ENCODE measurements at regions of chr2 and their contacts with region 1.

Region 1: GRCh38 chr2:196239622-196240587 is 68.5 kb upstream of the STK17B start:
- DNase-seq: peak; percentile 95
- H3K4me3 Mint-ChIP-seq: peak overlapping the region; percentile 68
- H3K27ac Mint-ChIP-seq: peak overlapping the region; percentile 99
- H3K4me1 Mint-ChIP-seq: peaks cover 72% of the 10 kb centered on the region
- H3K27me3 Mint-ChIP-seq: no peaks in the 10 kb centered on the region

Region 2: DNA sequence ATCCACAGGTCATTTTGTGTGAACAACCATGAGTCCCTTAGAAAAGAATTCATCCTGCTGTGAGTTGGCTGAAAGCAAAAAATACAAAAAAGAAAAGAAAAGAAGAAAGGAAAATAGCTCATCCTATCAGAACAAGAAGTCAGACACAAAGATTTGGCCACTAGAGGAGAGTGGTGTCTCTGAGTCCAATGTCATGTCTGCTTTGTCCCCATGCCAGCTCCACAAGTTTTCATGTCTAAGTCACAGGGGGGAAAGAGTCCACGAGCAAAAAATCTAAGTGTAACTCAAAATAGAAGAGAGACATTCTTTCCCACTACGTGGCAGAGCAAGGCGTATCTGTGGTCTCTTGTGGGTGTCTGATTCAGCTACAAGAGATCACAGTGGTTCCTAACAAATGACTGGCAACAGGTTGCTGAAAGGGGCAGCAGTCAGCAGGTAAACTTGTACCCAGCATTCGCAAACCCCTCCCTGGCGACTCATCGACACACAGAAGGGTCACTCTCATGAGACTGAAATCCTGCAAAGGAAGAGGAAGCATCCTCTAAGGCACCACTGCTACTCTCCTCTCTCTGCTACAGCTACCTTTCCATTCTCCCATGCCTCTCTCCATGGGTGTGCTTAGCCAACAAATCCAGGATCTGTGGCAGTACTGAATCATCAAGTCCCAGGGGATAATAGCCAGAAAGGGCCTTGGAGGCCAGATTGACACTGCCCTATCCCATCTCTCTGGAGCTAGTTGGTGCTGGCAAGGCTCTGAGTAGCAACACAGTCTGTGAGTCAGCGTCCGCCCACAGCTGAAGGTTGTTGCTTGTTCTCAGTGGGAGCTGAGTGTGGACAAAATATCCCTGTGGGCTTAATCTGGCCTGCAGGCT is 705.9 kb before region 1 on chr2:
- intact Hi-C with region 1: loop called (anchors 5 kb)
- DNase-seq: peak; percentile 89
- H3K4me3 Mint-ChIP-seq: peak overlapping the region; percentile 87
- H3K27ac Mint-ChIP-seq: peak overlapping the region; percentile 99
- H3K4me1 Mint-ChIP-seq: peaks cover 72% of the 10 kb centered on the region
- H3K27me3 Mint-ChIP-seq: no peaks in the 10 kb centered on the region

Region 3: DNA sequence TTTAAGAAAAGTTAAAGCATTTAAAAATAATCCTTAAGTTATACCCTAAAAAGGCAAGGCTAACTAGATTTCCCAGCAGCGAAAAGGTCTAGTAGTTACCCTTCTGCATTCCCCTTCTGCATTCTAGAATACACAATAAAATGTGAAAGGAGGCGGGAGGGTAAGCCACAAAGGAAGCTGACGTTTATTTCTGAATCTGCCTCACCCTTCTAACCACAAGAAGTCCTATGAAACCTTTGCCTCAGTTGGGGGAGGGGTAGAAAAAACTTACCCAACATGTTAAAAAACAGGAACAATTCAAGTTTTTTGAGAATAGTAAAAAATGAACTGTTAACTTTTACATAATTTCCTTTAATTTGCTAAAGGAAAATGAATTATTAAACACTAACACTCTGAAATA is 79.8 kb before region 1 on chr2:
- intact Hi-C with region 1: loop called (anchors 1 kb)
- DNase-seq: peak; percentile 93
- H3K4me3 Mint-ChIP-seq: peak overlapping the region; percentile 86
- H3K27ac Mint-ChIP-seq: peak overlapping the region; percentile 88
- H3K4me1 Mint-ChIP-seq: peaks cover 60% of the 10 kb centered on the region
- H3K27me3 Mint-ChIP-seq: no peaks in the 10 kb centered on the region

Region 4: DNA sequence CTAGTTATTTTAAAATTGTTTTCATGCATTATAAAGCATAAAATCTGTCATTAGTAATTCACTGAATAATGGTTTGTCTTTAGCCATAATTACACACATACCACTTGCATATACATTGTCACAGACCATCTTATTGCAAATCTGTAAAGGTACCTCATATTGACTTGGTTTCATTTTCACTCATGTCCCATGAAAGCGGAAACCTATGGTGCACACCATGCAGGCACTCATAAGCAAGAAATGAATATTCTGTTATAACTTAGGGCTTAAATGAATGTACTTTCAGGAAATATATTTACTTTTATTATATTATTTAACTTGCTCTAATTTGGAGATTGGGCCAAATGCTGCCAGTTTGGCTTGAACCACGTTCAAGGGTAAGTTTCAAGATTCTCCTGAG is 39.3 kb before region 1 on chr2:
- intact Hi-C with region 1: loop called (anchors 1 kb)
- DNase-seq: peak; percentile 85
- H3K4me3 Mint-ChIP-seq: peak overlapping the region; percentile 55
- H3K27ac Mint-ChIP-seq: peak overlapping the region; percentile 90
- H3K4me1 Mint-ChIP-seq: peaks cover 35% of the 10 kb centered on the region
- H3K27me3 Mint-ChIP-seq: no peaks in the 10 kb centered on the region

Region 5: DNA sequence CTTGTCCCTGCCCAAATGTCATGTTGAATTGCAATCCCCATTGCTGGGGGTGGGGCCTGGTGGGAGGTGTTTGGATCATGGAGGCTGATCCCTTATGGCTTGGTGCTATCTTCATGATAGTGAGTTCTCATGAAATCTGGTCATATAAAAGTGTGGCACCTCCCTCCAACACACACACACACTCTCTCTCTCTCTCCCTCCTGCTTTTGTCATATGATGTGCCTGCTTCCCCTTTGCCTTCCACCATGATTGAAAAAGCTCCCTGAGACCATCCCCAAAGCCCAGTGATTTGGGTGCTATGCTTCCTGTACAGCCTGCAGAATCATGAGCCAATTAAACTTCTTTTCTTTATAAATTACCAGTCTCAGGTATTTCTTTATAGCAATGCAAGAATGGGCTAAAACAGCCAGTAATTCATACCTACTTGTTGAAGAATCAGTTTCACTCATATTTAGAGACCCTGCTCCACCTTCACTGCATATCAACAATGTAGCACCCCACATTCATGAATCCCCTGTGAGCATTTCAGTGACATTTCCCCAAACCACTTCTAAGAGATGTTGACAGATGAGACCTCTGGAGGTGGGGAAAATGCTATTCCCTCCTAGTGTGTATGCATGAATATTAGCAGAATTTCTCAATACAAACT is 13.7 kb before region 1 on chr2:
- intact Hi-C with region 1: loop called (anchors 1 kb)
- DNase-seq: peak; percentile 55
- H3K4me3 Mint-ChIP-seq: no peak overlapping the region
- H3K27ac Mint-ChIP-seq: peak overlapping the region; percentile 14
- H3K4me1 Mint-ChIP-seq: peaks cover 58% of the 10 kb centered on the region
- H3K27me3 Mint-ChIP-seq: no peaks in the 10 kb centered on the region

Region 6: GRCh38 chr2:196263181-196263747 is 23.4 kb after region 1 on chr2:
- intact Hi-C with region 1: loop called (anchors 1 kb)
- DNase-seq: peak; percentile 89
- H3K4me3 Mint-ChIP-seq: peak overlapping the region; percentile 72
- H3K27ac Mint-ChIP-seq: peak overlapping the region; percentile 93
- H3K4me1 Mint-ChIP-seq: peaks cover 58% of the 10 kb centered on the region
- H3K27me3 Mint-ChIP-seq: no peaks in the 10 kb centered on the region

Region 7: GRCh38 chr2:196286821-196287220 is 46.9 kb after region 1 on chr2:
- intact Hi-C with region 1: loop called (anchors 1 kb)
- DNase-seq: no peak
- H3K4me3 Mint-ChIP-seq: no peak overlapping the region
- H3K27ac Mint-ChIP-seq: no peak overlapping the region
- H3K4me1 Mint-ChIP-seq: peaks cover 38% of the 10 kb centered on the region
- H3K27me3 Mint-ChIP-seq: no peaks in the 10 kb centered on the region

Measured in activated CD4-positive, alpha-beta T cell treated with anti-CD3 and anti-CD28 coated beads, Interleukin-2, amount 10 ng/mL, durations not matched to agents 24 days and 14 days (primary cell).